Breast epithelium (tissue), 4 donors: ENCODE measurements at regions of chr6 and their contacts with region 1.

Region 1: DNA sequence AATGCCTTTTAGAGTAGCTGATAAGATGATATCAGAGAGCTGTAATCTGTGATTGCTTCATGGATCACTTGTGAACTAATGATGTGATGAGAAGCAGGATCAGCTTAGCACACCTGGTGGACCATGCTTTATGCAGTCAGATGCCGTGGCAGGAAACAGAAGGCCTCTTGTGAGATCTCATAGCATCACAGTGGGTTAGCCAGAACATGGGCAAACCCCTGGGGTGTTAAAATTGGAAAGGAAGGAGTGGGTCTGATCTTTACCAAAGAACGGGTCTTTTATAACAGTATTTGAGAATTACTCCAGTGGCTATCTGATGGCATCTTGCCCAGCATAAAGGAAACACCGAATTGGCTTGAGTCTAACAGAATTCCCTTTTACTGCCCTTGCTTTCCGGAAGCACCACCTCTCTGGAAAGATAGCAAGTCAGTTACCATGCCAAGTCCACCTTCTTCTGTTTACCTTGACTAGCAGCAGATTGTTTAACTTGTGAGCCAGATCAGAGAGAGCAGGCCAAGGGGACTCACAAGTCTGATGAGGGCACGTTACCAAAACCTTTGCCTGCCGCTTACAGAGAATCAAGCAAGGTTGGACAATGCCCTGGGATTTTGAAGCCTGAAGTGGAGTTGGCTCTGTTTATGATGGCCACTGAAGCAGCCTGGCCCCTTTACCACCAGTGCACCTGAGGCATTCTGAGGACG is 20.9 kb upstream of the SRF start:
- DNase-seq: no peak
- H3K4me3 ChIP-seq: no peak overlapping the region
- H3K27ac ChIP-seq: peak overlapping the region in 1 of 2 donors; percentile 15
- H3K4me1 ChIP-seq: no peaks in the 10 kb centered on the region
- H3K27me3 ChIP-seq: no peaks in the 10 kb centered on the region
- CTCF ChIP-seq: no peak
- POLR2A ChIP-seq: no peak

Region 2: DNA sequence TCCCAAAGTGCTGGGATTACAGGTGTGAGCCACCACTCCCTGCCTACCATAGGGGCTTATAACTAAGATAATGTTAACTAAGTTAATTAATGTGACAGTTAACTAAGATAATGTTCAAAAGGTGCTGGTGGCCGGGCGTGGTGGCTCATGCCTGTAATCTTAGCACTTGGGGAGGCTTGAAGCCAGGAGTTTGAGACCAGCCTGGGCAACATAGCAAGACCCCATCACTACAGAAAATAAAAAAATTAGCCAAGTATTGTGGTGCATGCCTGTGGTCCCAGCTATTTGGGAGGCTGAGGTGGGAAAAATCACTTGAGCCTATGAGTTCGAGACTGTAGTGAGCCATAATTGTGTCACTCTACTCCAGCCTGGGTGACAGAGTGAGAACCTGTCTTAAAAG is 11.9 kb before region 1 on chr6:
- intact Hi-C with region 1: no loop called
- DNase-seq: no peak
- H3K4me3 ChIP-seq: no peak overlapping the region
- H3K27ac ChIP-seq: no peak overlapping the region
- H3K4me1 ChIP-seq: peaks cover 0 to 1% of the 10 kb centered on the region in 2 donors
- H3K27me3 ChIP-seq: no peaks in the 10 kb centered on the region
- CTCF ChIP-seq: no peak
- POLR2A ChIP-seq: no peak

Region 3: DNA sequence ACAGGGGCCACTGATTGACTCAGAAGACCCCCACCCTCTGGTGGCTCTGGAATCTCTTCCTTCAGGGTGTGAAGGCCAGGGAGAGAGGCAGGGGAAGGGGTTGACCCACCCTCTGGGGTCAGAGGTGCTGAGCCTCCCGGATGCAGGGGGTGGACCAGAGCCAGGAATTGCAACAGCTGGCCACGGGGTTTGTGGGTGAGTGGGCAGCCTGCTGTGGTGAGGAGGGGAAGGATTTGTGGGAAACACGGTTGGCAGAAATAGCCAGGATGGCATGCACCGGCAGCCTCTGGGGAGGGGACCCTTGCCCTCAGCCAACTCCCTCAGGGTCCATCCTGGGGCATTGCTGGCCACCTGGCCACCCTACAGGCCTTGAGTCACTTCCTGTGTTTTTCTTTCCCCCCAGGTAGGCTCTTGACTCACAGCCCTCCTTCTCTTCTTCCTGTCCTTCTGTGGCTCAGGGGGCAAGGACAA is 884.2 kb after region 1 on chr6:
- intact Hi-C with region 1: loop called (anchors 5 kb)
- DNase-seq: peak in 1 of 2 donors; percentile 38
- H3K4me3 ChIP-seq: no peak overlapping the region
- H3K27ac ChIP-seq: peak overlapping the region; percentile 52 to 72
- H3K4me1 ChIP-seq: peaks cover 0 to 11% of the 10 kb centered on the region in 2 donors
- H3K27me3 ChIP-seq: no peaks in the 10 kb centered on the region
- CTCF ChIP-seq: no peak
- POLR2A ChIP-seq: no peak